Endothelial cell of umbilical vein (primary cell): ENCODE measurements at regions of chr5 and their contacts with region 1.

Region 1: GRCh38 chr5:55159763-55160492 is at the start of gene GPX8:
- DNase-seq: peak; percentile 89
- H3K4me3 ChIP-seq: peak within 1 kb of the TSS; percentile 66 to 100 (median 96)
- H3K27ac ChIP-seq: peak within 1 kb of the TSS; percentile 89
- H3K4me1 ChIP-seq: peaks cover 53% of the 10 kb centered on the region
- H3K27me3 ChIP-seq: no peaks in the 10 kb centered on the region
- CTCF ChIP-seq: peak; percentile 42 to 46
- POLR2A ChIP-seq: peak; percentile 88
- total RNA-seq, gene GPX8: 147 and 161 TPM in 2 replicates

Region 2: GRCh38 chr5:54844905-54845566 is 314.9 kb before region 1 on chr5:
- CTCF ChIA-PET with region 1: interaction called, 20 read pairs
- POLR2A ChIA-PET with region 1: no interaction called
- dilution Hi-C with region 1: no loop called
- intact Hi-C with region 1: no loop called
- DNase-seq: peak; percentile 65
- H3K4me3 ChIP-seq: no peak overlapping the region
- H3K27ac ChIP-seq: no peak overlapping the region
- H3K4me1 ChIP-seq: peaks cover 6% of the 10 kb centered on the region
- H3K27me3 ChIP-seq: peaks cover 0 to 2% of the 10 kb centered on the region in 2 experiments
- CTCF ChIP-seq: peak; percentile 17 to 45
- POLR2A ChIP-seq: no peak

Region 3: GRCh38 chr5:54874373-54874921 is 285.5 kb before region 1 on chr5:
- CTCF ChIA-PET with region 1: interaction called, 20 read pairs
- POLR2A ChIA-PET with region 1: no interaction called
- dilution Hi-C with region 1: no loop called
- intact Hi-C with region 1: no loop called
- DNase-seq: peak; percentile 92
- H3K4me3 ChIP-seq: no peak overlapping the region
- H3K27ac ChIP-seq: no peak overlapping the region
- H3K4me1 ChIP-seq: peaks cover 3% of the 10 kb centered on the region
- H3K27me3 ChIP-seq: peaks cover 0 to 4% of the 10 kb centered on the region in 2 experiments
- CTCF ChIP-seq: no peak
- POLR2A ChIP-seq: no peak

Region 4: GRCh38 chr5:54959673-54960418 is 200.1 kb before region 1 on chr5:
- CTCF ChIA-PET with region 1: interaction called, 24 read pairs
- POLR2A ChIA-PET with region 1: no interaction called
- dilution Hi-C with region 1: no loop called
- intact Hi-C with region 1: no loop called
- DNase-seq: peak; percentile 57
- H3K4me3 ChIP-seq: no peak overlapping the region
- H3K27ac ChIP-seq: no peak overlapping the region
- H3K4me1 ChIP-seq: peaks cover 2% of the 10 kb centered on the region
- H3K27me3 ChIP-seq: no peaks in the 10 kb centered on the region
- CTCF ChIP-seq: peak; percentile 50
- POLR2A ChIP-seq: no peak

Region 5: DNA sequence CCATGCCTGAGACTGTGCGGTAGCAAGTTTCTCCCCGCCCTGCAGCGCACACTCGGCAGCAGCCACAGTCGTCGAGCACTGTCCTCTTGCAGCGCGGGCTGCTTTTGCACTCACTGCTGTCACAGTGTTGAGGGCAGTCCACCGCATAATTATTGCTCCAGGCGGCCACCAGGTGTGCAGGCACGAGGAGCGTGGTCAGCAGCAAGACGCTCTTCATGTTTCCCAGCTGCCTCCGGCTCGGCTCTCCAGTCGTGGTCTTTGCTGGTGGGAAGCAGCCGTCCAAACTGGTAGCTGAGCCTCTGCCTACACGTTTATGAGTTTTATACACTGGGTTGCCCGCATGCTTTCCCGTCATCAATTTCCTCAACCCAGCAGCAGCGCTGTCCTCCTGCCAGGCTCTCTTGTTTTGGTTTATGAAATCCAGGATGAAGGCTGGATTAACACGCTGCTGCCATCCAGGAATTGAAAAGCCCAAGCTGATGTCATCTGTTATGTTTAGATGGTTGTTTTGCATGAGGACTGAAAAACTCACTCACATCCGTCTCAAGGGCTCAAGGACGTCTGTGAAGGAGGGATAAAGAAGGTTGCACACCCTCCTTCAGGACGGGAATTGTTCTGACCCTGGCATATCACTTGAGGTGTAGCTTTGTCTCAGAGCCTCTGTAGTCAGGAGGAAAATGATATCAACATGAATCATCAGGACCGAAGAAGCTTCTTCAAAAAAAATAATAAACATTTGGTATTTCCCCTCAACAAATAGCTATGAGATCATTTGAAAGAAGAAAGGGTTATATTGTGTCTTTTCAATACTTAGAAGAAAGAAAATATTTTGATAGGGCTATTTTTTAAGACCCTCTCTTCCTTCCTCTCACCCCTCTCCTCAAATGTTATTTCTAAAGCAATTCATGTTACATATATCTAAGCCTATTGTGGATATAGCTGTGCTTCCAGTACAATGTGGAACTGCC is 174.3 kb before region 1 on chr5 and contains the start of gene ESM1:
- CTCF ChIA-PET with region 1: interaction called, 57 read pairs
- POLR2A ChIA-PET with region 1: interaction called, 6 read pairs
- dilution Hi-C with region 1: no loop called
- intact Hi-C with region 1: loop called (anchors 1 kb)
- DNase-seq: peak; percentile 99
- H3K4me3 ChIP-seq: peak within 1 kb of the TSS; percentile 69 to 99 (median 97)
- H3K27ac ChIP-seq: peak within 1 kb of the TSS; percentile 99
- H3K4me1 ChIP-seq: peaks cover 45% of the 10 kb centered on the region
- H3K27me3 ChIP-seq: no peaks in the 10 kb centered on the region
- CTCF ChIP-seq: peak; percentile 28 to 34
- POLR2A ChIP-seq: peak; percentile 92
- total RNA-seq, gene ESM1: 577 and 781 TPM in 2 replicates

Region 6: DNA sequence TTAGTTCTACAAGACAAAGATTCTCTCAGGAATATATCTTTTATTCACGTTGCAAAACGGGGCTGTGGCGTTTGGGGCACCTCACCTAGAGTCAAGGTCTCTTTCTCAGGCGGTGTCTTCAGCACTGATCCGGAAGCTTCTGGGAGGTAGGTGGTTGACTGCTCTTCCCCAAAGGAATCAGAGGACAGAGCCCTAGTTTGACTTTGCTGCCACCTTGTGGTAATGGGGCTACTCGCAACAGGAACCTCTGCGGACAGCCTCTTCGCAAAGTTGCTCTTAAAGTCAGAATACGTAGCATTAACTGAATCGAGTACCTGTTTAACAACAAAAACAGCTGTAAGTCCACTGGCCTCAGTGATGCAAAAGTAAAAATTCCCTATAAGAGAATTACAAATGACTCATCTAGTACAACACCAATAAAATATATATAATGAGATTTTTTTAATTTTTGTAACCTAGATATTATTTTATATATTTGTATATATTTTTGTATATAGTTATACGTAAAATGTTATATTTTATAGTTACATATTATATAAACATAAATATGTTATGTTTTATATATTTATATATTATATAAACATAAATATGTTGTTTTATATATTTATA is 13.3 kb before region 1 on chr5:
- CTCF ChIA-PET with region 1: interaction called, 35 read pairs
- POLR2A ChIA-PET with region 1: interaction called, 5 read pairs
- dilution Hi-C with region 1: no loop called
- intact Hi-C with region 1: no loop called
- DNase-seq: peak; percentile 92
- H3K4me3 ChIP-seq: no peak overlapping the region
- H3K27ac ChIP-seq: no peak overlapping the region
- H3K4me1 ChIP-seq: peaks cover 5% of the 10 kb centered on the region
- H3K27me3 ChIP-seq: no peaks in the 10 kb centered on the region
- CTCF ChIP-seq: peak; percentile 90 to 94
- POLR2A ChIP-seq: no peak

Region 7: GRCh38 chr5:55232985-55233928 is 73.3 kb after region 1 on chr5 and contains the start of gene CCNO:
- CTCF ChIA-PET with region 1: interaction called, 5 read pairs
- POLR2A ChIA-PET with region 1: no interaction called
- dilution Hi-C with region 1: loop called (anchors 10 kb)
- intact Hi-C with region 1: no loop called
- DNase-seq: peak; percentile 83
- H3K4me3 ChIP-seq: peak within 1 kb of the TSS; percentile 44 to 70 (median 53)
- H3K27ac ChIP-seq: no peak within 1 kb of the TSS
- H3K4me1 ChIP-seq: peaks cover 26% of the 10 kb centered on the region
- H3K27me3 ChIP-seq: peaks cover 45% of the 10 kb centered on the region in 2 experiments
- CTCF ChIP-seq: no peak
- POLR2A ChIP-seq: no peak
- total RNA-seq, gene CCNO: 0.58 and 0.88 TPM in 2 replicates